ENCODE measurements at regions of chrX and their contacts with region 1.

Region 1: DNA sequence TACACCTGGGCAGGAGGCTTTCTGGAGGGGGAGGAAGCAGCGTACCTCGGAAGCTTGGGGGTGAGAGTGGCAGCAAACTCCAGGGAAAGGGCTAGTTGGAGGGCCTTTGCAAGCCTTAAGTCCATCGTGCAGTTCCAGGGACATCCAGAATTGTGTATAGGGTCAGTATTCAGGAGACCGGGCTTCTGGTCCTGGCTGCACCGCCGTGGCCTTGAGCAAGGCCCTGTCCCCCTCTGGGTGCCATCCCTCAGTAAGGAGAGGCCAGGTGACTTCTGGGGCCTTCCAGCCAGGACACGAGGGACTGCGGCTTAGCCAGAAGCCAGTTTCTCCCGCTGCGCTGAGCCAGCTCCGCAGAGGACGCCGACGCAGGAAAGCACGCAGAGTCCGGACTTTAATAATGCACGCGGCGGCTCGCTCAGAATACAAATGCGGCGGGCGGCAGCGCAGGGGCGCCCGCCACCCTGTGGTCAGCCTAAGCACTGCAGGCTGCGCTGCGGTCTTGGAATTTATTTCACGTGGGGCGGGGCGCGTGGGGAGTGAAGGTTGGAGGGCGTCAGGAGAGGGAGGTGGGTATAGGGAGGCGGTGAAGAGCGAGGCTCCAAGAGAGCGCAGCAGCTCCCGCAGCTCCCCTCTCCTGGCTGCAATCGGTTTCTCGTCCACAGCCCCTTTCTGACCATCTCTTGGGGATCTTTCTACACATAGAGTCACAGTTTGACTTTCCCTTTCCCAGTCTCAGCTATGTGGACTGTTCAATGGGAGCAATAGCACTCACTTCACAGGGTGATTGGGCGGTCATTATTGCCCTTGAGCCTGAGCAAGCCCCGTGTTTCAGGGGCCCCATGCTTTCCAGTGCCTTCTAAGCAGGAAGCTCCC is 94.1 kb upstream of the GPR50 start:
- DNase-seq: peak; percentile 24 to 57 (median 33)
- H3K4me3 ChIP-seq: no peak overlapping the region
- H3K4me3 Mint-ChIP-seq: peak overlapping the region in 1 of 7 donors; percentile 20
- H3K27ac ChIP-seq: no peak overlapping the region
- H3K27ac Mint-ChIP-seq: no peak overlapping the region
- H3K4me1 ChIP-seq: no peaks in the 10 kb centered on the region
- H3K4me1 Mint-ChIP-seq: peaks cover 2 to 5% (median 4%) of the 10 kb centered on the region in 3 donors
- H3K27me3 ChIP-seq: no peaks in the 10 kb centered on the region
- H3K27me3 Mint-ChIP-seq: peaks cover 16 to 26% of the 10 kb centered on the region in 2 donors

Region 2: DNA sequence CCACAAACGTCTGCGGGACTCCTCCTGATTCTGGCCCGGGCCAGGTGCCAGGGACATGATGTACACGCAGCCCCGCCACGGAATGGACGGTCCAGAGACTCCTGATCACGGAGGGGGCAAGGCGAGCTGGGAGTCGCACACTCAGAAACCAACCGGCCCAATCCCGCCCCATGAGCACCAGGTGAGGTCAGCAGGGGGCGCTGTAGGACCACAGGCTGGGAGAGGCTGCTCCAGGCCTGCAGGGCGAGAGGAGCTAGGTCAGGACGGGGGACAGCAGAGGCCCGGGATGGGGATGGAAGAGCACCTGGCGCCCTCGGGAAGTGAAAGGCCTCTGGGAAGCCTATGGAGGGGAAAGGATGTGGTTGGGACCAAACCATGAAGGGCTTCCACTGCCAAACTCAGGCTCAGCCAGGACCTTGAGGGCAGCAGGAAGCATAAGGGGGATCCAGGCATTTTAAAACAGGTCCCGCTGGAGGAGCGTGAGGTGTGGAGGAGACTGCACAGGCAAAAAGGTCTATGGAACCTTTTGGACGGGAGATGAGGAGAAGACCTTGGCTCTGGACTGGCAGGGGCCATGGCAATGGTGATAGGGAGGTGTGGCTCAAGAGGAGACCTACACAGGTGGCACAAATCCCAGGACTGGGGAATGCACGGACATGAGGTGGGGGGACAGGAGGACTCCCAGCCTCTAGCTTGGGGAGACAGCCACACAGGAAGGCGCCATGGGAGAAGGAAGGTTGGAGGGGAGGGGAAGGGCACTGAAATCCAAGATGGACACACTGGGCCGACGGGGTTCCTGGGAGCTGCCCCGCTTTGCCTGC is 310.0 kb before region 1 on chrX:
- CTCF ChIA-PET with region 1: interaction called, 72 read pairs
- POLR2A ChIA-PET with region 1: no interaction called
- DNase-seq: peak; percentile 42 to 75 (median 57)
- H3K4me3 ChIP-seq: no peak overlapping the region
- H3K4me3 Mint-ChIP-seq: no peak overlapping the region
- H3K27ac ChIP-seq: no peak overlapping the region
- H3K27ac Mint-ChIP-seq: peak overlapping the region in 1 of 8 donors; percentile 47
- H3K4me1 ChIP-seq: no peaks in the 10 kb centered on the region
- H3K4me1 Mint-ChIP-seq: no peaks in the 10 kb centered on the region
- H3K27me3 ChIP-seq: no peaks in the 10 kb centered on the region
- H3K27me3 Mint-ChIP-seq: peaks cover 0 to 2% of the 10 kb centered on the region in 2 donors

Region 3: DNA sequence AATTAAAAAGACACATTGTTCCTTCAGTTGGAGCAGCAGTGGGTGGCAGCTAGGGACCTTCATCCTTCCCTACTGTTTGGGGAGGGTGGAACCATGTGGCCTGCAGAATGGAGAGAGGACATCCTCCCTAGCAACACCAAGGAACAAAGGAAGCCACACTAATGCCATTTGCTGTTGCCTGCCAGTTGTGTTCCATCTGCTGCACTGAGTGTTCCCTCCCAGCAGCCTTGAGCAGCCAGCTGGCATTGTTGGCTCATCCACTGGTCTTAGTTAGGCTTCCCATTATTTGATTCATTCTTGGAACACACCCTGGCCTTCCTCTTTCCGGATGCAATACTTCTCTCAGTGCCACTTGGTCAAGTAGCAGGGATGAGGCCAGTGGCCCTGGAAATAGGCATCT is 124.1 kb before region 1 on chrX:
- CTCF ChIA-PET with region 1: no interaction called
- POLR2A ChIA-PET with region 1: no interaction called
- DNase-seq: no peak
- H3K4me3 ChIP-seq: no peak overlapping the region
- H3K4me3 Mint-ChIP-seq: no peak overlapping the region
- H3K27ac ChIP-seq: no peak overlapping the region
- H3K27ac Mint-ChIP-seq: no peak overlapping the region
- H3K4me1 ChIP-seq: no peaks in the 10 kb centered on the region
- H3K4me1 Mint-ChIP-seq: no peaks in the 10 kb centered on the region
- H3K27me3 ChIP-seq: no peaks in the 10 kb centered on the region
- H3K27me3 Mint-ChIP-seq: peaks cover 2 to 4% of the 10 kb centered on the region in 2 donors

Measured in CD8-positive, alpha-beta memory T cell (primary cell).